ENCODE measurements at regions of chr1 and their contacts with region 1.

Region 1: GRCh38 chr1:37479255-37480124 is 5.1 kb downstream of the ZC3H12A start:
- DNase-seq: peak; percentile 99
- H3K4me3 Mint-ChIP-seq: peak overlapping the region; percentile 89
- H3K27ac Mint-ChIP-seq: peak overlapping the region; percentile 93
- H3K4me1 Mint-ChIP-seq: peaks cover 37% of the 10 kb centered on the region
- H3K27me3 Mint-ChIP-seq: no peaks in the 10 kb centered on the region
- CTCF ChIP-seq: no peak

Region 2: DNA sequence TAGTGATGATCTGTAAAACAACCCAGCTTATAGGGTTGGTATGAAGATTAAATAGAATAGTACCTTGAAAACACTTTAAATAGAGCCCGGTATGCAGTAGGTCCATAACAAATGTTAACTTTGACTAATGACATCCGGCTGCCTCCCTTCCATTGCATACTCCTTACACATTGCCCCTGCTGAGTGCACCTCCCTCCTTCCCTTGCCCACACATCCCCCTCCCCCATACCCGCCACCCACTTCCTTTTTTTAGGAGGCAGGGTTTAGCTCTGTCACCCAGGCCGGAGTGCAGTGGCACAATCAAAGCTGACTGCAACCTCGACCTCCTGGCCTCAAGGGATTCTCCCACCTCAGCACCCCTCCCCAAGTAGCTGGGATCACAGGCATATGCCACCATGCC is 29.6 kb before region 1 on chr1:
- CTCF ChIA-PET with region 1: interaction called, 234 read pairs
- POLR2A ChIA-PET with region 1: interaction called, 79 read pairs
- intact Hi-C with region 1: loop called (anchors 2 kb)
- DNase-seq: no peak
- H3K4me3 Mint-ChIP-seq: no peak overlapping the region
- H3K27ac Mint-ChIP-seq: peak overlapping the region; percentile 54
- H3K4me1 Mint-ChIP-seq: peaks cover 12% of the 10 kb centered on the region
- H3K27me3 Mint-ChIP-seq: no peaks in the 10 kb centered on the region
- CTCF ChIP-seq: no peak

Region 3: GRCh38 chr1:37465593-37466517 is 13.6 kb before region 1 on chr1:
- CTCF ChIA-PET with region 1: interaction called, 144 read pairs
- POLR2A ChIA-PET with region 1: interaction called, 143 read pairs
- intact Hi-C with region 1: no loop called
- DNase-seq: peak; percentile 35
- H3K4me3 Mint-ChIP-seq: no peak overlapping the region
- H3K27ac Mint-ChIP-seq: no peak overlapping the region
- H3K4me1 Mint-ChIP-seq: peaks cover 4% of the 10 kb centered on the region
- H3K27me3 Mint-ChIP-seq: no peaks in the 10 kb centered on the region
- CTCF ChIP-seq: no peak

Region 4: DNA sequence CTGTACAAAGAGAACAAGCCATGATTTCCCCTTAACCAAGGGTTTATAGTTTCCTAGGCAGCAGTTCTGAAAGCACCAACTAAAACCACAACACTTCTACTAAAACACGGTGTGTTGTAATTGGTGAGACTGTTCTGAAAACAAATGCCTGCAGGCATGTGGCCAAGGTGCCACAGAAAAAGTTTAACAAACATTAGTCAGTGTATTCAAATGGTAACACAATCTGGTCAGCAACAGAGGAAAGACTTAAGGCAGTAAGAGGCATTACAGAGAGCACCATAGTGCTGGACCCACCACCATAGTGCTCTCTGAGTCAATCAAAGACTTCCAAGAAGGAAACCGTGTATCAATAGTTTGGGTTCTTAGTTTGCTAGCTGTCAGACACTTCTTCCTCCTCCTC is 57.9 kb after region 1 on chr1:
- CTCF ChIA-PET with region 1: no interaction called
- POLR2A ChIA-PET with region 1: interaction called, 22 read pairs
- intact Hi-C with region 1: loop called (anchors 10 kb)
- DNase-seq: peak; percentile 91
- H3K4me3 Mint-ChIP-seq: peak overlapping the region; percentile 22
- H3K27ac Mint-ChIP-seq: peak overlapping the region; percentile 89
- H3K4me1 Mint-ChIP-seq: peaks cover 29% of the 10 kb centered on the region
- H3K27me3 Mint-ChIP-seq: no peaks in the 10 kb centered on the region
- CTCF ChIP-seq: no peak

Region 5: DNA sequence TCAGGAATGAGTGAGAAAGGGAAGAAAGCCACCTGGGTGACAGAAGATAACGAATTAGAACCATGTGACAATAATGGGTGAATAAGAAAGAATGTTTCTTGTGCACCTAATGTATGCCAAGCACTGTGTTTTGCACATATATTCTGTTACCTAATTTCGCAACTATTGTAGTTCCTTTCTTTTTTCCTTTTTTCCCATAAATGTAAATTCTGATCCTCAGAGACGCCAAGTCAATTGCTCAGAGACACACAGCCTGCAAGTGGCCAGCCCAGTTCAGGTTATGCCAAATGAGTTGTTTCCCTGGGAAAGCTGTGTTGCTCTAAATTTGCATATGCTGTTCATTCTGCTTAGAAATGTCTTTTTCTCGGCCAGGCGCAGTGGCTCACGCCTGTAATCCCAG is 156.9 kb after region 1 on chr1:
- CTCF ChIA-PET with region 1: no interaction called
- POLR2A ChIA-PET with region 1: no interaction called
- intact Hi-C with region 1: no loop called
- DNase-seq: no peak
- H3K4me3 Mint-ChIP-seq: no peak overlapping the region
- H3K27ac Mint-ChIP-seq: no peak overlapping the region
- H3K4me1 Mint-ChIP-seq: peaks cover 4% of the 10 kb centered on the region
- H3K27me3 Mint-ChIP-seq: peaks cover 58% of the 10 kb centered on the region
- CTCF ChIP-seq: no peak

Measured in MCF 10A (cell line).